ENCODE measurements at regions of chr2 and their contacts with region 1.

Region 1: GRCh38 chr2:237662671-237663093 is 35.3 kb downstream of the LRRFIP1 start:
- DNase-seq: peak; percentile 97
- H3K4me3 ChIP-seq: peak overlapping the region; percentile 22 to 36 (median 30)
- H3K27ac ChIP-seq: peak overlapping the region; percentile 78 to 84 (median 82)
- H3K4me1 ChIP-seq: peaks cover 27 to 49% (median 43%) of the 10 kb centered on the region in 4 donors
- H3K27me3 ChIP-seq: no peaks in the 10 kb centered on the region
- CTCF ChIP-seq: peak in 1 of 3 experiments; percentile 18
- EP300 ChIP-seq: no peak
- POLR2A ChIP-seq: no peak

Region 2: DNA sequence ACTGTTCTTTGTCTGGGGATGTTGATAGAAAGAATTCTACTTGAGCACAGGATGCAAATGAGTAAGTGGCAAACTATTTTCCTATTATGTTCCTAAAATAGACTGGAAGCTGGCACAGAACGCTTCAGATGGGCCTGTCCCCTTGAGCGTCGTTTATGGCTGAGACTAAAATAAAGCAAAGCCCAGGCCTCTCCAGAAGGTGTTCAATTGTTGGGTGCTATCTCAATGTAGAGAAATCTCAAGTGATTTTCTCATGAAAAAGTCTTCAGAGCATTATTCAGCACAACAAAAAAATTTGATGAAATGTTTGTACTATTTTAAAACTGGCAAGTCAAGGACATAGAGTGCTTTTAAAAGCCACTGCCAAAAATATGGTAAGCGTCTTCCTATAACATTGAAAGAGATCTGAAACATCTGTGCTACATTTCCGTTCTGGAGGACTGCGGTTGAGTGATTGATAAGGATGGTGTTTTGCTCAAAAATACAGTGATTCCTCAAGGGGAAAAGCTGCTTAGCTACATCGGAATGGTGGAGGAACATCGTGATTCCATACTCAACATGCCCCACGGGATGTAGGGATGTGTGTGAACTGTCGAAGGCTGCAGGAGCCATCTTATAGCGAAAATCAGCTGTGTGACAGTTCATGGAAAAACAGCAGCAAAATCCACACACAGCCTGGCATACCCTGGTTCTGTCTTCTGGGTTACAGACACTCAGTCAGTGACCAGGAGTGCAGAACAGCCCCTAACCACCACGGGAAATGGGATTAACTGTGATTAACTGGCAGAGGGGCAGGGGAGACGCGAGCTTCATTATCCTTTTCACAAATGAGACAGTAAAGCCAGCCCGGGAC is 45.7 kb before region 1 on chr2:
- intact Hi-C with region 1: loop called (anchors 10 kb)
- DNase-seq: no peak
- H3K4me3 ChIP-seq: no peak overlapping the region
- H3K27ac ChIP-seq: peak overlapping the region; percentile 84 to 85 (median 84)
- H3K4me1 ChIP-seq: peaks cover 38 to 56% (median 50%) of the 10 kb centered on the region in 4 donors
- H3K27me3 ChIP-seq: no peaks in the 10 kb centered on the region
- CTCF ChIP-seq: no peak
- EP300 ChIP-seq: no peak
- POLR2A ChIP-seq: no peak

Measured in esophagus muscularis mucosa (tissue), 4 donors.